ENCODE measurements at regions of chr11 and their contacts with region 1.

Region 1: GRCh38 chr11:57644748-57645688 is 4.7 kb downstream of the YPEL4 start:
- DNase-seq: peak; percentile 83
- ATAC-seq: peak; percentile 77

Region 2: DNA sequence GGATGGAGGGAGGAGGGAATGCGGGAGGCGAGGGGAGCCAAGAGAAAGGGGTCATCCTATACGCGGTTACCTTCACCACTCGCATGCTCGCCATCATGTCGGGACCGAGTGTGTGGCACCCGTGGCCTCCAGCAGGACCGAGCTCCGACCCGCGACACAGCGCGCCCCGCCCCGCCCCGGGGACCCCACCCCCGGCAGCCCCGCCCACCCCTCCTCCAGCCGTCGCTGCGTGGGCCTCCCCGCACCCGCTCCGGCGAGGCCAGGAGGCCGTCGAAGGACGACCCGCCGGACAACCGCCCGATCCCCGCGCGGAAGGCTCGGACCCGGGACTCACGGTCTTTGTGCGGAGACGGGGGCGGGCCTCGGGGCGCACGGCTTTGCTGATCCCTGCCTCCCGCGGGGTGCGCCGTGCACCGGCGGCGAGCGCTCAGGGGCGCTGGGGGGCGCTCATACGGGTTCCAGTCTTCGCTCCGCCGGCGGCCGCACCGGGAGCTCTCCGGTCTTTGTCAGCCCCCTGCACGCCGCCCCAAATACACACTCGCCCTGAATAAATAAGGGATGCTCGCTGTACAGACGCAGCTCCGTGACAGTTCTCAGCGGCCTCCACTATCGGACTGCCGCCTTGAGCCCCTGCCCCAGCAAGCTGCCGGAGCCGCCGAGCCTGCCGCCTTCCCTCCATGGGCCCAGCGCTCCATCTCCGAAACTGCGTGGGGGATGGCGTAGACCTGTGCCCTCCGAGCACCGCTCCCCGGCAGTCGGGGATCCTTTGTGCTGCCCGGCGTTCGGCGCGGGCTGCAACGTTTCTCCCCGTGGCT is 77.3 kb before region 1 on chr11 and contains the start of gene UBE2L6:
- intact Hi-C with region 1: loop called (anchors 5 kb)
- DNase-seq: peak; percentile 92
- ATAC-seq: peak; percentile 88
- total RNA-seq, gene UBE2L6: 18.0 TPM

Measured in left ventricle myocardium superior (tissue), 1 donor.